ENCODE measurements at regions of chr17 and their contacts with region 1.

Region 1: DNA sequence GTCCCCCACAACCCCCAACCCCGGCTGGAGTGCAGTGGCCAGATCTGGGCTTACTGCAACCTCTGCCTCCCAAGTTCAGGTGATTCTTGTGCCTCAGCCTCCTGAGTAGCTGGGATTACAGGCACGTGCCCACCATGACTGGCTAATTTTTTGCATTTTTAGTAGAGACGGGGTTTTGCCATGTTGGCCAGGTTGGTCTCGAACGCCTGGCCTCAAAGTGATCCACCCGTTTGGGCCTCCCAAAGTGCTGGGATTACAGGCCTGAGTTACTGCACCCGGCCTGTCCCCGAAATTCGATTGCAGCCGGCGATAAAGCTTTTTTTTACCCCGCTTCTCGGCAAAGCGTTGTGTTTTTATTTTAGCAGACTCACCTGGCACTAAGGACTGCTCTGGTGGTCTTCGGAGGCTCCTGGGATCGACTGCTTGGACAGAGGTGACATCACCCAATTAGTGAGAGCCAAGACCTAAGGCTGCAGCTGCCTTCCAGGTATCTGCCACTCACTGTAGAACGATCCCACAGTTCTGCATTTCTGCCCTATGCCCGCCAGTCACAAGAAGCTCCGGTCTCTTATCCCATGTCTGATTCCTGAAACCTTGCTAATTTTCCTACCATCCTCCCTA is 82.2 kb upstream of the ARL4D start:
- DNase-seq: no peak
- ATAC-seq: no peak
- H3K4me3 ChIP-seq: no peak overlapping the region
- H3K27ac ChIP-seq: no peak overlapping the region
- H3K4me1 ChIP-seq: no peaks in the 10 kb centered on the region
- H3K27me3 ChIP-seq: no peaks in the 10 kb centered on the region
- CTCF ChIP-seq: no peak

Region 2: GRCh38 chr17:43024407-43025289 is 292.0 kb before region 1 on chr17 and contains the start of gene RND2:
- intact Hi-C with region 1: loop called in 1 of 2 experiments (anchors 10 kb)
- DNase-seq: peak; percentile 81 to 95 (median 88)
- ATAC-seq: peak; percentile 77
- H3K4me3 ChIP-seq: peak within 1 kb of the TSS; percentile 43 to 56
- H3K27ac ChIP-seq: peak within 1 kb of the TSS in 1 of 2 donors; percentile 61
- H3K4me1 ChIP-seq: peaks cover 8 to 46% of the 10 kb centered on the region in 2 donors
- H3K27me3 ChIP-seq: no peaks in the 10 kb centered on the region
- CTCF ChIP-seq: peak; percentile 57 to 61
- polyA plus RNA-seq, gene RND2: 1.6 to 2.0 (median 1.8) TPM

Region 3: GRCh38 chr17:43431714-43432523 is 115.3 kb after region 1 on chr17:
- intact Hi-C with region 1: no loop called
- DNase-seq: no peak
- ATAC-seq: peak; percentile 41
- H3K4me3 ChIP-seq: no peak overlapping the region
- H3K27ac ChIP-seq: no peak overlapping the region
- H3K4me1 ChIP-seq: peaks cover 0 to 9% of the 10 kb centered on the region in 2 donors
- H3K27me3 ChIP-seq: no peaks in the 10 kb centered on the region
- CTCF ChIP-seq: no peak

Region 4: DNA sequence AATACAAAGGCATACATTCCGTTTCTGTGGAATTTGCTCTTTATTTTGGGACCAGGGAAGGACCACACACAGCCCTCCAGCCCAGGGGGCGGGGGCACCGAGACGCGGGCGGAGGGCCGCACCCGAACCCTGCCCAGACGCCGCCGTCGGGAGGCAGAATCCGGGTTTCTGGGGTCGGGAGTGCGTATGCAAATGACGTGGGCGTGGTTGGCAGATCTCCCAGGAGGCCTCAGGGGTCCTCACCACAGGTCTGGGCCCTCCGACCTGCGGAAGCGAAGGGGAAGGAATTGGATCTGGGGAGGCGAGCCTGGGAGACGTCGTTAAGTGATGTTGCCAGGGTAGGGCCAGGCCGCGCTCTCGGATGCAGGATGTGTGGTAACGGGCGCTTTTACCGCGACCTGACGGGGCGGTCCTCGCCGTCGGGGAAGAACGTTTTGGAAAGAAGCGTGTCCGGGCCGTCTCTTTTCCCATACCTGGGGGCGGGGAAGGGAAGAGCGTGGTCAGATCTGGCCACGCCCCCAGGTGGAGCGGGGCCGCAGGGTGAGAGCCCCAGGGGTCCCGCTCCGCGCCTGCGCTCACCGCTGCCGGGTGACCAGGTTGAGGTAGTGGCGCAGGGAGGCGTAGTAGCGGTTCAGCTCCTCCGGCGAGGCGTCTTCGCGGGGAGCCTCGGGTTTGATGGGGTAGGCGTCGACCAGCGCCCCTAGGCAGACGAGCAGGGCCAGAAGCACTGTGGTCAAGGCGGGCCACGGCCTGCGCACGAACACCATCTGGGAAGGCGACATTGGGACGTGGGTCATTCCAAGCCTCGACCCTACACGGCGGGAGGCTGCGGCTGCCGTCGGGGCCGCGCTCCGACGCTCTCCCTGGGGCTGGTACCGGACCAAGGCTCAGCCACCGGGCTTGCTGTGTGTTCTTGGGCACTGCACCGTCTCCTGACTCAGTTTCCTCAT is 636.4 kb after region 1 on chr17:
- intact Hi-C with region 1: no loop called
- DNase-seq: peak in 1 of 4 donors; percentile 71
- ATAC-seq: no peak
- H3K4me3 ChIP-seq: no peak overlapping the region
- H3K27ac ChIP-seq: no peak overlapping the region
- H3K4me1 ChIP-seq: peaks cover 9 to 10% of the 10 kb centered on the region in 2 donors
- H3K27me3 ChIP-seq: peaks cover 31 to 75% of the 10 kb centered on the region in 2 donors
- CTCF ChIP-seq: no peak